Activated B cell treated with CpG ODN at 0.5 μM for 24 hours (primary cell): ENCODE measurements at regions of chr13 and their contacts with region 1.

Region 1: DNA sequence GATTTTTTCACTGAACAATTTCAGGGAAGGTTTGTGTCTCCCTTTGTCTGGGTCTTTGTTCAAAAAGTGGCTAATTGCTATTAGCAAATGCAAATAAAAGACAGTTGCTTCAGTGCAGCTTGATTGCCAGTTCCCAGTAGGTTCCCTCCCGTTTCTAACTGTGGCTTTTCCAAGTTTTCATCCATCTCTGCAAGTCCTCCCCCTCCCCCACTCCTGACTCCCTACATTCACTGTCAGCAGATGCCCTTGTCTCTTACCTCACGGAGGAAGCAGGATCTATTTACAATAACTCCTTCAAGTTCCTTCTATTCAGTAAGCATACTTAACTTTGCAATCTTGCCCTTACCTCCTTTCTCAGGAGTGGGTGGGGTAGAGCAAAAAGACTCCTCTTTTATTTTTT is 55.4 kb upstream of the SCEL start:
- DNase-seq: no peak
- ATAC-seq: no peak
- H3K4me3 Mint-ChIP-seq: no peak overlapping the region
- H3K27ac Mint-ChIP-seq: no peak overlapping the region
- H3K4me1 Mint-ChIP-seq: peaks cover 13% of the 10 kb centered on the region
- H3K27me3 Mint-ChIP-seq: no peaks in the 10 kb centered on the region
- CTCF ChIP-seq: no peak

Region 2: DNA sequence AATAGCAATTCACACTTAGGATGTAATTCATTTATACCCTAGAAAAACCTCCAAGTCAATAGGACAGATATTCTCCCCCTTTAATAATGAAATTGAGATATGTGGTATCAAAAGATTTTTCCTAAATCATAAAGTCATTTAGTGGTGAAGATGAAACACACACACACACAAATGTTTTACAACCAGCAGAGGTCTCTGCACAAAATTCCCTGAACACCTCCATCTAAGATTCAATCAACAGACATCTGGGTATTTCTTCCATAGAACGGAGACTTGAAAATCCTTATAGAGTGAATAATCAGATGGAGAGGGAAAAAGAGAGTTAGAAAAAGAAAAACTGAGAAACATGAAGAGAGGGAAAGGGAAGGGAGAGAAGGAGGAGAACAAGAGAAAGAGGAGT is 205.9 kb before region 1 on chr13:
- CTCF ChIA-PET with region 1: interaction called, 38 read pairs
- POLR2A ChIA-PET with region 1: interaction called, 8 read pairs
- intact Hi-C with region 1: loop called (anchors 1 kb)
- DNase-seq: no peak
- ATAC-seq: no peak
- H3K4me3 Mint-ChIP-seq: no peak overlapping the region
- H3K27ac Mint-ChIP-seq: peak overlapping the region; percentile 59
- H3K4me1 Mint-ChIP-seq: peaks cover 20% of the 10 kb centered on the region
- H3K27me3 Mint-ChIP-seq: no peaks in the 10 kb centered on the region
- CTCF ChIP-seq: no peak

Region 3: GRCh38 chr13:77300176-77301037 is 179.7 kb before region 1 on chr13:
- CTCF ChIA-PET with region 1: interaction called, 9 read pairs
- POLR2A ChIA-PET with region 1: no interaction called
- intact Hi-C with region 1: loop called (anchors 1 kb)
- DNase-seq: no peak
- ATAC-seq: peak; percentile 46
- H3K4me3 Mint-ChIP-seq: peak overlapping the region; percentile 57
- H3K27ac Mint-ChIP-seq: peak overlapping the region; percentile 87
- H3K4me1 Mint-ChIP-seq: peaks cover 84% of the 10 kb centered on the region
- H3K27me3 Mint-ChIP-seq: no peaks in the 10 kb centered on the region
- CTCF ChIP-seq: no peak

Region 4: GRCh38 chr13:77338961-77339401 is 141.1 kb before region 1 on chr13:
- CTCF ChIA-PET with region 1: interaction called, 11 read pairs
- POLR2A ChIA-PET with region 1: interaction called, 15 read pairs
- intact Hi-C with region 1: no loop called
- DNase-seq: peak; percentile 42
- ATAC-seq: peak; percentile 69
- H3K4me3 Mint-ChIP-seq: peak overlapping the region; percentile 79
- H3K27ac Mint-ChIP-seq: peak overlapping the region; percentile 95
- H3K4me1 Mint-ChIP-seq: peaks cover 80% of the 10 kb centered on the region
- H3K27me3 Mint-ChIP-seq: no peaks in the 10 kb centered on the region
- CTCF ChIP-seq: no peak

Region 5: GRCh38 chr13:77415253-77416071 is 64.6 kb before region 1 on chr13:
- CTCF ChIA-PET with region 1: interaction called, 8 read pairs
- POLR2A ChIA-PET with region 1: interaction called, 28 read pairs
- intact Hi-C with region 1: no loop called
- DNase-seq: no peak
- ATAC-seq: peak; percentile 86
- H3K4me3 Mint-ChIP-seq: peak overlapping the region; percentile 11
- H3K27ac Mint-ChIP-seq: peak overlapping the region; percentile 89
- H3K4me1 Mint-ChIP-seq: peaks cover 35% of the 10 kb centered on the region
- H3K27me3 Mint-ChIP-seq: no peaks in the 10 kb centered on the region
- CTCF ChIP-seq: no peak

Region 6: GRCh38 chr13:77448679-77449078 is 31.4 kb before region 1 on chr13:
- CTCF ChIA-PET with region 1: interaction called, 3 read pairs
- POLR2A ChIA-PET with region 1: interaction called, 12 read pairs
- intact Hi-C with region 1: no loop called
- DNase-seq: no peak
- ATAC-seq: no peak
- H3K4me3 Mint-ChIP-seq: no peak overlapping the region
- H3K27ac Mint-ChIP-seq: no peak overlapping the region
- H3K4me1 Mint-ChIP-seq: peaks cover 5% of the 10 kb centered on the region
- H3K27me3 Mint-ChIP-seq: no peaks in the 10 kb centered on the region
- CTCF ChIP-seq: no peak